WTC11 (cell line): ENCODE measurements at regions of chr4 and their contacts with region 1.

Region 1: DNA sequence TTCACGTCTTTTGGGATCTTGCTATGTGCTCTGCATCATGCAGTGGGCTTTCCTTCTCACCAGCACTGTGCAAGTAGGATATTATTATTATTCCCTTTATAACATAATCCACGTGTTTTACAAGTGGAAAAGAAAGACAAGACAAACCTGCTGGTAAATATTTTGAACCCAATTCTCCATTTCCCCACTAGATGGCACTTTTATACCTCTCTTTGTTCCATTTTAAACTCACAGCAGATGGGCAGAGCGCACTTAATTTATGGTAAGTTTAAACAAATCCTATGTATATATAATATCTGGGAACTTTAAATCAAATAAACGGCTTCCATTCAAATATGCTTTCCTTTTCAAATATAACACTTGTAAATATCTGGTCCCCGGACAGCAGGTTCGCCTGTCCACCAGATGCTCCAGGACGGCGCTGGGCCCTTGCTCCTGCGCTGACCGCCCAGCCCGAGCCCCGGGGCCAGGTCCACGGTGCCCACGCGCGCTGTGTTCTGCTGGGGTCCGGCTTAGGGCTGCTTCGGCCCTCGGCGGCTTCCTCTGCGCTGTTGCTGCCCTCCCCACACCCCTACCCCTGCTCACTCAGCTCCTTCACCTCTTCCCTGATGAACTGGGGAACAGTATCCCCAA is 31.1 kb downstream of the F11 start:
- DNase-seq: no peak
- ATAC-seq: peak; percentile 23
- H3K4me3 Mint-ChIP-seq: no peak overlapping the region
- H3K27ac Mint-ChIP-seq: no peak overlapping the region
- H3K4me1 Mint-ChIP-seq: peaks cover 23% of the 10 kb centered on the region
- H3K27me3 Mint-ChIP-seq: peaks cover 5% of the 10 kb centered on the region; the same call in 1 of the 2 replicates
- CTCF ChIP-seq: peak; percentile 46

Region 2: DNA sequence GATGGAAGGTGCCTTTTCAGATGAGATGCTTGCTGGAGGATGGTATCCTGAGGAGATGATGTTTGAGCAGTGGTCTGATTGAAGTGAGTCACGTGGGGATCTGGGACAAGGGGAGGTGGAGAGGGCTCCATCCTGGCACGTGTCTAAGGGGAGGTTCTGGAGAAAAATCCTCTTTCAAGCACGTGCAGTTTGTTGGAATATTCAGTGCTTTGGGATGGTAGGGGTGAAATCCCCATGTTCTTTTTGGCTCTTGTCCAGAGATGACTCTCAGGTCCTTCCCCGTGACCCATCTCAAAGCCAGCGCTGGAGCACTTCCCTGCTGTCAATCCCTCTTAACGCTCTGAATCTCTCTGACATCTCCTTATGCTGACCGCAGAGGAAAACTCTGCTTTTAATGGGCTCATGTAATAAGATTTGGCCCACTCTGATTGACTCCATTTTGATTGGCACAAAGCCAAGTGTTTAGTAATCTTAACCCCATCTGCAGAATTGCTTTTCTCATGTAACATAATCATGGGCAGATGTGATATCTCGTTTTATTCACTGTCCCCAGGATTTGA is 80.6 kb before region 1 on chr4:
- CTCF ChIA-PET with region 1: no interaction called
- POLR2A ChIA-PET with region 1: no interaction called
- DNase-seq: no peak
- ATAC-seq: no peak
- H3K4me3 Mint-ChIP-seq: no peak overlapping the region
- H3K27ac Mint-ChIP-seq: no peak overlapping the region
- H3K4me1 Mint-ChIP-seq: peaks cover 6% of the 10 kb centered on the region; the same call in 1 of the 2 replicates
- H3K27me3 Mint-ChIP-seq: peaks cover 7% of the 10 kb centered on the region
- CTCF ChIP-seq: no peak

Region 3: GRCh38 chr4:186272699-186273391 is 24.3 kb before region 1 on chr4:
- CTCF ChIA-PET with region 1: no interaction called
- POLR2A ChIA-PET with region 1: no interaction called
- DNase-seq: no peak
- ATAC-seq: no peak
- H3K4me3 Mint-ChIP-seq: no peak overlapping the region
- H3K27ac Mint-ChIP-seq: no peak overlapping the region
- H3K4me1 Mint-ChIP-seq: peaks cover 8% of the 10 kb centered on the region
- H3K27me3 Mint-ChIP-seq: no peaks in the 10 kb centered on the region
- CTCF ChIP-seq: no peak

Region 4: GRCh38 chr4:186318481-186318880 is 21.4 kb after region 1 on chr4:
- CTCF ChIA-PET with region 1: no interaction called
- POLR2A ChIA-PET with region 1: no interaction called
- DNase-seq: no peak
- ATAC-seq: no peak
- H3K4me3 Mint-ChIP-seq: no peak overlapping the region
- H3K27ac Mint-ChIP-seq: no peak overlapping the region
- H3K4me1 Mint-ChIP-seq: peaks cover 3% of the 10 kb centered on the region
- H3K27me3 Mint-ChIP-seq: no peaks in the 10 kb centered on the region
- CTCF ChIP-seq: no peak

Region 5: GRCh38 chr4:186472948-186473347 is 175.8 kb after region 1 on chr4:
- CTCF ChIA-PET with region 1: interaction called, 10 read pairs
- POLR2A ChIA-PET with region 1: no interaction called
- DNase-seq: peak; percentile 32
- ATAC-seq: peak; percentile 90
- H3K4me3 Mint-ChIP-seq: no peak overlapping the region
- H3K27ac Mint-ChIP-seq: no peak overlapping the region
- H3K4me1 Mint-ChIP-seq: peaks cover 15% of the 10 kb centered on the region
- H3K27me3 Mint-ChIP-seq: no peaks in the 10 kb centered on the region; the same call in 1 of the 2 replicates
- CTCF ChIP-seq: peak; percentile 45; the same call in 1 of the 2 replicates

Region 6: DNA sequence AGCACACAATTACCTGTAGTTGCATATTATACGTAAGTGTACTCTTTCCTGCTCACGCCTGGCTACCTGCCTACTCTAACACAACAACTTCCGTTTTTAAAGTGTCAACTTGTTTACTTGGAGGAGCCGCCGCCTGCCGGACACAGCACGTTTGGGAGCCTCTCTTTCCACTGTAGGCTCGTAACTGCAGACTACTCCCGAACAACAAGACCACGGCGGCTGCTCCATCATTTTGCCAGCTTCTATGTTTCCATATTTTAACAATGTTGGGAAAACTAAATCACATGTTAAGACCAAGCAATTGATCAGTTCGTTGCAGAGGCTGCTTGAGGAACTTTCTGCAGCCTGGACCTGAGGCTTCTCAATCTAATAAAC is 257.4 kb after region 1 on chr4:
- CTCF ChIA-PET with region 1: interaction called, 15 read pairs
- POLR2A ChIA-PET with region 1: no interaction called
- DNase-seq: peak; percentile 52
- ATAC-seq: peak; percentile 51
- H3K4me3 Mint-ChIP-seq: peak overlapping the region; percentile 78
- H3K27ac Mint-ChIP-seq: no peak overlapping the region
- H3K4me1 Mint-ChIP-seq: peaks cover 11% of the 10 kb centered on the region
- H3K27me3 Mint-ChIP-seq: peaks cover 15% of the 10 kb centered on the region
- CTCF ChIP-seq: no peak